Activated T-helper 2 cell treated with anti-CD3 and anti-CD28 coated beads, Interferon-gamma antibody, Interleukin-2, Interleukin-4, amounts not matched to agents 10 μg/mL and 5 μg/mL and 100 μg/mL, durations not matched to agents 14 hours and 24 hours and 36 hours (primary cell): ENCODE measurements at regions of chr6 and their contacts with region 1.

Region 1: DNA sequence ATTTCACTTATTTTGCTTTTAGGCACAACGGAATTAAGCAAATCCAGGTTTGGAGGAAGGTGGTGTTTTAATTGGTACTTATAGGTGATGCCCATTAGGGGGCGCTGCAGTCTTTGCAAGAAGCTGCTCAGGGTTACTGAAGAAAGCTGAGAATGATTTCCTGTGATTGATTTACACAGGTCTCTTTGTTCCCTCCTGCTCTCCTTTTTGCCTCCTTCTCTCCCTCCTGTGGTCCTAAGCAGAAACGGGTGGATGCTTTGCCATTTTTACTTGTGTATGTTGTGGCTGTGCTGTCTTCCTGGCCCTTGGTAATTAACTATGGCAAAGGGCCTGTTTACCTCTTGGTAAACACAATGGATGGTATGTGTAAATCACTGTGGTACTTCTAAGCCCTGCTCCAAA is 97.8 kb downstream of the ANKS1A start:
- DNase-seq: peak; percentile 40
- H3K4me3 Mint-ChIP-seq: no peak overlapping the region
- H3K27ac Mint-ChIP-seq: no peak overlapping the region
- H3K4me1 Mint-ChIP-seq: no peaks in the 10 kb centered on the region
- H3K27me3 Mint-ChIP-seq: no peaks in the 10 kb centered on the region

Region 2: DNA sequence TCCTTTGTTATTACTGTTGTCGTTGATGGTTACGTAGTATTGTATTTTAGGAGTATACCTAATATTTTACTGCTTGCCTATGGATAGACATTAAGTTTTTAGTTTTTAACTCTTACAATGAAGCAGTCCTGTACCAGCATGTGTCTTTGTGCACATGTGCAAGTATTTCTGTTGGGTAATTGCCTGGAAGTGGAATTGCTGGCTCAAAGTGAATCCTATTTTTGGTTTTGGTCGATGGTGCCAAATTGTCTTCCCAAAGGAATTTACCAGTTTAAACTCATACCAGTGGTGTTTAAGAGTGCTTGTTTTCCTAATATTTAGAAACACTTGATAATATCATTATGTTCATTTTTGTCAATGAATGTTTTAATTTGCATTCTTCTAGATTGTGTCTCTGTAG is 22.3 kb before region 1 on chr6:
- intact Hi-C with region 1: no loop called
- DNase-seq: no peak
- H3K4me3 Mint-ChIP-seq: no peak overlapping the region
- H3K27ac Mint-ChIP-seq: no peak overlapping the region
- H3K4me1 Mint-ChIP-seq: peaks cover 2% of the 10 kb centered on the region
- H3K27me3 Mint-ChIP-seq: peaks cover 6% of the 10 kb centered on the region

Region 3: GRCh38 chr6:35139908-35140655 is 153.2 kb after region 1 on chr6:
- intact Hi-C with region 1: loop called (anchors 1 kb)
- DNase-seq: no peak
- H3K4me3 Mint-ChIP-seq: peak overlapping the region; percentile 26
- H3K27ac Mint-ChIP-seq: peak overlapping the region; percentile 52
- H3K4me1 Mint-ChIP-seq: peaks cover 16% of the 10 kb centered on the region
- H3K27me3 Mint-ChIP-seq: peaks cover 26% of the 10 kb centered on the region

Region 4: GRCh38 chr6:35202066-35202546 is 215.3 kb after region 1 on chr6:
- intact Hi-C with region 1: loop called (anchors 2 kb)
- DNase-seq: no peak
- H3K4me3 Mint-ChIP-seq: no peak overlapping the region
- H3K27ac Mint-ChIP-seq: no peak overlapping the region
- H3K4me1 Mint-ChIP-seq: peaks cover 1% of the 10 kb centered on the region
- H3K27me3 Mint-ChIP-seq: peaks cover 47% of the 10 kb centered on the region

Region 5: GRCh38 chr6:35240840-35241801 is 254.3 kb after region 1 on chr6:
- intact Hi-C with region 1: loop called (anchors 1 kb)
- DNase-seq: peak; percentile 56
- H3K4me3 Mint-ChIP-seq: no peak overlapping the region
- H3K27ac Mint-ChIP-seq: no peak overlapping the region
- H3K4me1 Mint-ChIP-seq: no peaks in the 10 kb centered on the region
- H3K27me3 Mint-ChIP-seq: no peaks in the 10 kb centered on the region